Activated CD4-positive, alpha-beta T cell treated with anti-CD3 and anti-CD28 coated beads for 36 hours (primary cell): ENCODE measurements at regions of chr3 and their contacts with region 1.

Region 1: GRCh38 chr3:185308126-185308754 is 54.4 kb upstream of the EHHADH start:
- DNase-seq: peak; percentile 65
- ATAC-seq: peak; percentile 33
- H3K4me3 Mint-ChIP-seq: no peak overlapping the region
- H3K27ac Mint-ChIP-seq: no peak overlapping the region
- H3K4me1 Mint-ChIP-seq: no peaks in the 10 kb centered on the region
- H3K27me3 Mint-ChIP-seq: no peaks in the 10 kb centered on the region

Region 2: DNA sequence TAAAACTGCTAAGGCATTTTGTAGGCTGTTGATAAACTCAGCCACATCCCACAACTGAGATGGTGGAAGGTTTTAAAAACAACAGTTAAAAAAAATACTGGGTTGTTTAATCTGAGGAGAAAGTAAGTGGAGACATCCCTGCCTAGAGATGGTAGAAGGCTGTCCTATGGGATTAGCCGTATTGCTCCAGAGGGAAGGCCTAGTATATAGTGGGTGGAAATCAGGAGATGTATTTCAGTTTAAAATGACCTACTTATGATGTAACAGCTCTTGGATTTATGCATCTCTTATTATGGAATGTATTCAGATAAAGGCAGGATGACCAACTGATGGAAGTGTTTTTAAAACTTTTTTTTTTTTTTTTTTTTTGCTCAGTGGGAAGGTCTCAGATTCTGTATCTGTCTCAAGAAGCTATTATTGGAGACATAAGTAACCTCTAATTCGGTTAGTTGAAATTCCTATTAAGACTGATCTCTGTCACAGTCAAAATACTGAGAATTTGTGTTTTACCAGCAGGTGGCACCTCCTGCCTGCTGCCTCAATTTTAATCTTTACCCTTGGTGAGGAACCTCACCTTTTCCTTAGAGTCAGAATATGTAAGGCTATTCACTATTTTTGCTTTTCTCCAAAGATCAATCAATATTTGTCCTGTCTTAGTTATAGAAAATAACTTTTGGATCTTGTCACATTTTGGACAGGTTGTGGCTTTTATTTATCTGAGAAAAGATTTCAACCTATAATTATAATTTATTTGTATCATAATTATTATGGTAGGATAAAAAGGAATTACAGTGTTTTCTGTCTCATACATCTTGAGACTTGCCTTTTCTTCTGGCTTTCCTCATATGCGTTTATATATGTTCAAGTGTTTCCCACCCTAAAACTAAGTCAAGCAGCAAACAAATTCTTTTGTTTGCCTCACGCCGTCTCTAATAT is 433.3 kb before region 1 on chr3:
- CTCF ChIA-PET with region 1: interaction called, 4 read pairs
- POLR2A ChIA-PET with region 1: no interaction called
- intact Hi-C with region 1: loop called (anchors 2 to 10 kb)
- DNase-seq: peak; percentile 36
- ATAC-seq: no peak
- H3K4me3 Mint-ChIP-seq: no peak overlapping the region
- H3K27ac Mint-ChIP-seq: no peak overlapping the region
- H3K4me1 Mint-ChIP-seq: peaks cover 5% of the 10 kb centered on the region
- H3K27me3 Mint-ChIP-seq: no peaks in the 10 kb centered on the region

Region 3: GRCh38 chr3:185215873-185216606 is 92.2 kb before region 1 on chr3:
- CTCF ChIA-PET with region 1: interaction called, 10 read pairs
- POLR2A ChIA-PET with region 1: no interaction called
- intact Hi-C with region 1: no loop called
- DNase-seq: no peak
- ATAC-seq: no peak
- H3K4me3 Mint-ChIP-seq: no peak overlapping the region
- H3K27ac Mint-ChIP-seq: no peak overlapping the region
- H3K4me1 Mint-ChIP-seq: no peaks in the 10 kb centered on the region
- H3K27me3 Mint-ChIP-seq: no peaks in the 10 kb centered on the region

Region 4: DNA sequence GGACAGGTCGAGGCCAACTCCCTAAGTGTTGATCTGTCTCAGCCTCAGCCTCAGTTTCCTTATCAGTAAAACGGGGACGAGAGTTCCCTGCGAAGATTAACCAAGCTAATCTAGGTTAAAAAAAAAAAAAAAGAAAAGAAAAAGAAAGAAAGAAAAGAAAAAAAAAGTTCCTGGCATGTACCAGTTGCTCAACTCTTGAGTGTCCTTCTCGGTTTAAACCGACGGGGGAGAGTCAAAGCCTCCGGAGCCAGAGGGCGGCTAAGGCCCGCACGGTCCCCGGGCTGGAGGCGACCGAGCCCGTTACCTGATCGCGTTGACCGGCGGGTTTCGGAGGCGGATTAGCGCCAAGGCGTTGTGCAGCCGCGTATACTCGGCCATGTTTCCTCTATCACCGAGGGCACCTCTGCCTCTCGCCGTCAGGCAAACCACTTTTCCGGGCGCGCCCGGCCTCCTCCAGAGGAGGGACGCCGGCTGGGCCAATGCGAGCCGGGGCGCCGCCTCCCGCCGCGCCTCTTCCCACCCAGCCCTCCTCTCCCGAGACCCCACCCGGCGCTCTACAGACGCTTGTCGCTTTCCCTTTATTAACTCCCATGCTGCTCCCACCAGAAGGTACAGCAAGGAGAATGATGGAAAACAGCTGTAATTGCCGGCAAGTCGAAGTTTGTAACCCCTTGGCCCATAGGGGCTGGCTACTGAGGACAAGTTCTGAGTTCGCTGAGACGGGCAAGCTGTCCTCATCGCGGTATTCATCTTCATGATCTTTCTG is 54.4 kb before region 1 on chr3 and contains the start of gene EHHADH:
- CTCF ChIA-PET with region 1: no interaction called
- POLR2A ChIA-PET with region 1: no interaction called
- intact Hi-C with region 1: no loop called
- DNase-seq: peak; percentile 63
- ATAC-seq: peak; percentile 91
- H3K4me3 Mint-ChIP-seq: peak within 1 kb of the TSS; percentile 58
- H3K27ac Mint-ChIP-seq: no peak within 1 kb of the TSS
- H3K4me1 Mint-ChIP-seq: peaks cover 5% of the 10 kb centered on the region
- H3K27me3 Mint-ChIP-seq: peaks cover 21% of the 10 kb centered on the region
- total RNA-seq, gene EHHADH: 2.7 to 3.3 TPM

Region 5: DNA sequence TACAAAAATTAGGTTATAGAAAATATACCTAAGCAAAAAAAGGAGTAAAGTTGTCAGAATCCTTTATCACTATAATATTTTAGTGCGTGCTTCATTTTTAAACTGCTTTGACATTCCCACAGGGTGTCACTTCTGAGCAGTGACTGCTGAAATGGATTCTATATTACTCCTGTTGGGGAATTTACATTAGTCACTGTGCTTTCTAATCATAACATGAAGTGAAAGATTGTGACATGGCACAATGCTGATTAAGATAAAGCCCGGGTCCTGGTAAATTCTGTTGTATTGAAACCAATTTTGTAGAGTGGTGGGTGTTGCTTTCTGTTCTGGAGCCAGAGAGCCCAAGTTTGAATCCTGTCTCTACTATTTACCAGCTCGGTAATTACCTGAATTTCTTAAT is 18.0 kb before region 1 on chr3:
- CTCF ChIA-PET with region 1: interaction called, 11 read pairs
- POLR2A ChIA-PET with region 1: no interaction called
- intact Hi-C with region 1: loop called in 1 of 2 experiments (anchors 1 kb)
- DNase-seq: peak; percentile 20
- ATAC-seq: peak; percentile 90
- H3K4me3 Mint-ChIP-seq: no peak overlapping the region
- H3K27ac Mint-ChIP-seq: no peak overlapping the region
- H3K4me1 Mint-ChIP-seq: peaks cover 11% of the 10 kb centered on the region
- H3K27me3 Mint-ChIP-seq: no peaks in the 10 kb centered on the region

Region 6: DNA sequence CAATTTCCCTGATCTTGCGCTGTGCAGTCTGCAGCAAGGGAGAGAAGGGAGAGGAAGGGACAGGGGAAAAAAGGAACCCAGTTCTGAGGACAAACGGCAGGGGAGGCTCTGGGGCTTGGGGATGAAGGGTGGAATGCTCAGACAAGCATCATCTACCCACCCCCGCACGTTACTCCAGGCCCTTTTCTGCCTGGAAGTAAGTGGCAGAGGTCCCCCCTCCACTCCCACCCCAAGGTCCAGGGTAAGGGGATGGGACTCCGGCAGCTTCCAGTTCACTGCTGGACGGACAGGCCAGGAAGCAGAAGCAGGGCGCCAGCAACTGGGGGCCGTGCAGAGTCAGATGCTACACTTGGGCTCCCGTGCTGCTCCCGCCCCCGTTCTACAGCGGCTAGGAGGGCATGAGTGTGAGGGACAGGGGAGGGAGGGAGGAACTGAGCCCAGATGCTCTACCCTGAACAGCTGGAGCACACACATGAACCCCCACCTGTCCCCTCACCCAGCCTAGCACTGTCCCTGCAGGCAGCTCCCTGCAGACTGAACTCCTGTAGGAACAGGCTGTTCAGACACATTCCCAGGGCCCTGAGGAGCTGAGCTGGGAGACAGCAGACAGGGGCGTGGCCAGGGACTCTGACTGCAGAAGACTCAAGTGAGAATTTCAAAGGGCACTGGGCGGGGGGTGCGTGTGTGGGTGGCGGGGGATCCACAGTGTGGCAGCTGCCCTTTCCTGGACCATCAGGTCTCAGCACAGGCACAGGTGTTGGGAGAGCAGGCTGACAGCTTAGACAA is 337.5 kb after region 1 on chr3:
- CTCF ChIA-PET with region 1: no interaction called
- POLR2A ChIA-PET with region 1: no interaction called
- intact Hi-C with region 1: no loop called
- DNase-seq: no peak
- ATAC-seq: no peak
- H3K4me3 Mint-ChIP-seq: no peak overlapping the region
- H3K27ac Mint-ChIP-seq: no peak overlapping the region
- H3K4me1 Mint-ChIP-seq: no peaks in the 10 kb centered on the region
- H3K27me3 Mint-ChIP-seq: peaks cover 10% of the 10 kb centered on the region